Cardiac septum (tissue), 1 donor: ENCODE measurements at regions of chr9 and their contacts with region 1.

Region 1: GRCh38 chr9:105318729-105319191 is 74.3 kb downstream of the SLC44A1 start:
- DNase-seq: no peak

Region 2: GRCh38 chr9:105173306-105173705 is 145.5 kb before region 1 on chr9:
- intact Hi-C with region 1: loop called (anchors 10 kb)
- DNase-seq: no peak

Region 3: DNA sequence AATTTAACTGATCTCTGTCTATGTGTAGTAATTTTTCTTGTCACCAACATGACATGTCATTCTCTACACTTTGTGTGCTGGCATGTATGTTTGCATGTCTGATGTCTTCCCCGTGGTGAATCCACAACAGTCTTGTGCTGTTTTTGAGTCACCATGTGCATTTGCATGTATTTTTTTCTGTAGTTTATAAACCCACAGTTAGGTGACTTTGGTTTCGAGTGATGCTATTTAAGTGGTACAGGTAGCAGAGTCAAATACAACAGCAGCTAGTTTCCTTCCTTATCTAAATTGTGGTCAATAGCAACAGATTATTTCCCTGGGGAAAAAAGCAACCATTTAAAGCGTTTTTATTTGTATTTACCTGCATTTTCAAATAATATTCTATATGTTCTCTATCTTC is 39.2 kb after region 1 on chr9:
- intact Hi-C with region 1: no loop called
- DNase-seq: no peak

Region 4: DNA sequence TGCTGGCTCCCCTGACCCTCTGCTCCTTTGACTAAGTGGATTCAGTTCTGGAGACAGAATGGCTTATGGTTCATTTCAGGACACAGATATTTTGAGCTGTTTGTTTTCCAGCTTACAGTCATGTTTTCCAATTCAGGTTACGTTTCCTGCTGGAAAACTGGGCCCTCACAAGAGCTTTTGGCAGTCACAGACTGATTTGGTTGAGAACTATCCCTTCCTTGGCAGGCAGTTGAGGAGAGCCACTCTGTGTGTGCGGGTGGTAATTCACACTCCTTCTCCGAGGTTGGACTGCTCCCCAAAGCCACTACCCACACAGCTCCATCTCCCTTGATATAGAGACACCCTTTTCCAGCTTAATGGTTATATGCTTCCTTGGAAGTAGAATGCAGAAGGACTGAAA is 910.1 kb after region 1 on chr9:
- intact Hi-C with region 1: no loop called
- DNase-seq: no peak